ENCODE measurements at regions of chr20 and their contacts with region 1.

Region 1: GRCh38 chr20:44909872-44910689 is at the start of gene PABPC1L:
- DNase-seq: peak; percentile 90
- H3K4me3 ChIP-seq: peak within 1 kb of the TSS; percentile 74
- H3K27ac ChIP-seq: peak within 1 kb of the TSS; percentile 51
- H3K4me1 ChIP-seq: peaks cover 25% of the 10 kb centered on the region
- CTCF ChIP-seq: no peak
- total RNA-seq, gene PABPC1L: 48.8 and 58.7 TPM in 2 replicates

Region 2: GRCh38 chr20:44819936-44820335 is 90.1 kb before region 1 on chr20:
- CTCF ChIA-PET with region 1: no interaction called
- POLR2A ChIA-PET with region 1: no interaction called
- intact Hi-C with region 1: no loop called
- DNase-seq: no peak
- H3K4me3 ChIP-seq: no peak overlapping the region
- H3K27ac ChIP-seq: no peak overlapping the region
- H3K4me1 ChIP-seq: no peaks in the 10 kb centered on the region
- CTCF ChIP-seq: no peak

Region 3: GRCh38 chr20:44885392-44886265 is 24.5 kb before region 1 on chr20 and contains the start of gene YWHAB:
- CTCF ChIA-PET with region 1: no interaction called
- POLR2A ChIA-PET with region 1: interaction called, 6 read pairs
- intact Hi-C with region 1: loop called (anchors 2 kb)
- DNase-seq: peak; percentile 98
- H3K4me3 ChIP-seq: peak within 1 kb of the TSS; percentile 92
- H3K27ac ChIP-seq: peak within 1 kb of the TSS; percentile 78
- H3K4me1 ChIP-seq: peaks cover 42% of the 10 kb centered on the region
- CTCF ChIP-seq: peak; percentile 21; the same call in 1 of the 2 replicates
- total RNA-seq, gene YWHAB: 60.5 and 72.8 TPM in 2 replicates

Region 4: DNA sequence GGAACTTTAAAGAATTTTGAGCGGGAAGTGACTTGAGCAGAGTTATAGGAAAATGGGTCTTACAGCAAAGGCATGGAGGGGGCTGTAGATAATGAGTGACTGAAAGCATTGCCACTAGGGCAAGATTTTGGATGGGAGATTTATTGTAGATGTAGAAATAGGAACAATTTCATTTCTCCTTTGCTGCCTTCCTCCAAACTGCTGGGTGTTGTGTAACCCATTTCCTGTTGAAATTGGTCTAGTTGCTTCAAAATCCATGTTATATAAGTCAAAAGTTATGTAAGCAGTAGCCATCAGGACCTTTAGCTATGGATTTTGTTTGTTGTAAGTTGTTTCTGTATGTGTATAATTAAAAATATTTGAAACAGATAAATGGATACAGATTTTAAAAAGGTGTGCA is 13.5 kb before region 1 on chr20:
- CTCF ChIA-PET with region 1: interaction called, 3 read pairs
- POLR2A ChIA-PET with region 1: interaction called, 11 read pairs
- intact Hi-C with region 1: no loop called
- DNase-seq: peak; percentile 17
- H3K4me3 ChIP-seq: no peak overlapping the region
- H3K27ac ChIP-seq: peak overlapping the region; percentile 6
- H3K4me1 ChIP-seq: peaks cover 40% of the 10 kb centered on the region
- CTCF ChIP-seq: no peak

Region 5: GRCh38 chr20:45095753-45096371 is 185.8 kb after region 1 on chr20:
- CTCF ChIA-PET with region 1: no interaction called
- POLR2A ChIA-PET with region 1: no interaction called
- intact Hi-C with region 1: loop called (anchors 5 kb)
- DNase-seq: peak; percentile 81
- H3K4me3 ChIP-seq: no peak overlapping the region
- H3K27ac ChIP-seq: no peak overlapping the region
- H3K4me1 ChIP-seq: no peaks in the 10 kb centered on the region
- CTCF ChIP-seq: peak; percentile 90

Measured in OCI-LY7 (cell line).